Activated CD8-positive, alpha-beta T cell treated with anti-CD3 and anti-CD28 coated beads, Interleukin-2, amount 10 ng/mL, durations not matched to agents 7 days and 5 days (primary cell): ENCODE measurements at regions of chr12 and their contacts with region 1.

Region 1: GRCh38 chr12:12736759-12737676 is 19.9 kb downstream of the CDKN1B start:
- DNase-seq: peak; percentile 84
- ATAC-seq: peak; percentile 95
- H3K4me3 Mint-ChIP-seq: peak overlapping the region; percentile 73
- H3K27ac Mint-ChIP-seq: peak overlapping the region; percentile 89
- H3K4me1 Mint-ChIP-seq: peaks cover 68% of the 10 kb centered on the region
- H3K27me3 Mint-ChIP-seq: no peaks in the 10 kb centered on the region

Region 2: DNA sequence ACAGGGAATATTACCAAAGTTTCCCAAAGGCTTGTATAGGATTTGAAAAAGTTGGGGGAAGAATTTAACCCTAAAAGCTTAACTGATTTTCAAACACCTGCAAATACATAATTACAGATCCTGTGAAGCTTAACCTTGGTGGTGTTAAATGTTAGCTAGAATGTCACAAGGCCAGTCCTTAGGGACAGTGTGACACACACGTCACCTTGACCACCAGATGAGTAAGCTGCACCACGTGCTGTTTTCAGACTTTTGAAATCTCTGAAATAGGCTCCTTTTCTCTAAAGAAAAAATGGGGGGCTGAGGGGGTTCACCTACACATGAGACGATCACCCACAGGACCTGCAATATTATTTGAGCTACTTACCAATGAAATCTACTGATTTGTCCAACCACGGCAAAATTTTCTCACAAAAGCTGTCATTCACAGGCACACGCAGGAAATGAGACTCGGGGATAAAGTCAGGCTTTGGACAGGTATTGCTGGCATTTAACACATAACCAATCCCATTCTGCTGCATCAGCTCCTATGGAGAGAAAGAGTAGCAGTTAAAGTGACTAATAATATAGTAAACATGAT is 250.3 kb before region 1 on chr12:
- CTCF ChIA-PET with region 1: interaction called, 10 read pairs
- POLR2A ChIA-PET with region 1: interaction called, 7 read pairs
- DNase-seq: no peak
- ATAC-seq: no peak
- H3K4me3 Mint-ChIP-seq: no peak overlapping the region
- H3K27ac Mint-ChIP-seq: no peak overlapping the region
- H3K4me1 Mint-ChIP-seq: peaks cover 39% of the 10 kb centered on the region
- H3K27me3 Mint-ChIP-seq: no peaks in the 10 kb centered on the region

Region 3: GRCh38 chr12:12645485-12645884 is 91.5 kb before region 1 on chr12:
- CTCF ChIA-PET with region 1: interaction called, 19 read pairs
- POLR2A ChIA-PET with region 1: no interaction called
- DNase-seq: peak; percentile 46
- ATAC-seq: peak; percentile 83
- H3K4me3 Mint-ChIP-seq: no peak overlapping the region
- H3K27ac Mint-ChIP-seq: no peak overlapping the region
- H3K4me1 Mint-ChIP-seq: peaks cover 6% of the 10 kb centered on the region
- H3K27me3 Mint-ChIP-seq: no peaks in the 10 kb centered on the region

Region 4: DNA sequence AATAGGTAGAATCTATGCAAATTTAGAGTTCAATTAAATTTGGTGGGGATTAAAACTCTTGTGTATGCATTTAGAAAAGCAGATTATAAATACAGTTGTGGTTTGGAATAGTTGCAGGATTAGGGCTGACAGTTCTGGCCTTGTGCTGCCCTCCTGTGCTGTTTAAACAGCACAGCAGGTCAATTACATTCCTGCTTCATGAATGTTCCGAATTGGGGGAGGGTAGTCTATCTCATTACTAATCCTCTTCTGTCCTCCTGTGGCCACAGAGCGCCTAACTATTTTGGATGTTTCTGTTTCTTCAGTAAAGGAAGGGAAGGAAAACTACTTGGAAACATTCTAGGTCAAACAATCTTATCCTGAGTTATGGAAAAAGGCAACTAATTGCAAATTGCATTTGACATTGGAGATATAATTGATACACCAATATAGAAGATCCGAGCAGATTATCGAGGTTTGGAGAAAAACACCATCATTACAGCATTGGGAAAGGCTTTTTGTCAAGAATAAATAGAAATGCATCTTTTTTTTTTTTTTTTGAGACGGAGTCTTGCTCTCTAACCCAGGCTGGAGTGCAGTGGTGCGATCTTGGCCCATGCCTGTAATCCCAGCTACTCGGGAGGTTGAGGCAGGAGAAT is 32.3 kb before region 1 on chr12:
- CTCF ChIA-PET with region 1: interaction called, 29 read pairs
- POLR2A ChIA-PET with region 1: interaction called, 3 read pairs
- DNase-seq: no peak
- ATAC-seq: peak; percentile 54
- H3K4me3 Mint-ChIP-seq: no peak overlapping the region
- H3K27ac Mint-ChIP-seq: no peak overlapping the region
- H3K4me1 Mint-ChIP-seq: peaks cover 21% of the 10 kb centered on the region
- H3K27me3 Mint-ChIP-seq: no peaks in the 10 kb centered on the region

Region 5: GRCh38 chr12:12757121-12757520 is 20.1 kb after region 1 on chr12:
- CTCF ChIA-PET with region 1: interaction called, 11 read pairs
- POLR2A ChIA-PET with region 1: no interaction called
- DNase-seq: no peak
- ATAC-seq: no peak
- H3K4me3 Mint-ChIP-seq: no peak overlapping the region
- H3K27ac Mint-ChIP-seq: no peak overlapping the region
- H3K4me1 Mint-ChIP-seq: no peaks in the 10 kb centered on the region
- H3K27me3 Mint-ChIP-seq: no peaks in the 10 kb centered on the region